OCI-LY7 (cell line): ENCODE measurements at regions of chr5 and their contacts with region 1.

Region 1: DNA sequence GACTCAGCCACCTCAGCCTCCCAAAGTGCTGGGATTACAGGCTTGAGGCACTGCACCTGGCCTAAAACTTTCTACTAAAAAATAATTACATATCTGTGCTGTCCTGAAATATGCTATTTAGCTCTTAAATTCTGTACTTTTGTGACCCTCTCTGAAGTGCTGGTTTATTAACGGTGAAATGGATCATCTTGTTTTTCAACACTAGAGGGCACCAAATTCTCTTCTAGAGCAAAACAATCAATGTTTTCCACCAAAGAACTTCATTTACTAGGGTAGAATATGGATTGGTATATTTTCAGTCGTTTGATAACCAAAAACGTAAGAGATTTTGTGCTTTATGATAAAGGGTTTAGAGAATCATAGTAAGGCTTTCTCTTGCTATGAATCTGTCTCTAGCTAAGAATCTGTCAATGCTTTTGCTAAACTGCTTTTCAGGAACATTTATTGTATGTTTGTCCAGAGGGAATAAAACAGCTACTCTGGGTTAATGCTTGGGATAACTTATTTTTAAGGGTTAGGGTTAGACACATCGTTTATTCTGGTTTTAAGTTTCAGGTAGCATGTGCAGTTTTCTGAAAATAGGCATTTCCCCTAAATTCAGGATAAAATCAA is 63.6 kb downstream of the RNF180 start:
- DNase-seq: peak; percentile 43
- H3K4me3 ChIP-seq: no peak overlapping the region
- H3K27ac ChIP-seq: no peak overlapping the region
- H3K4me1 ChIP-seq: no peaks in the 10 kb centered on the region
- CTCF ChIP-seq: peak; percentile 87

Region 2: DNA sequence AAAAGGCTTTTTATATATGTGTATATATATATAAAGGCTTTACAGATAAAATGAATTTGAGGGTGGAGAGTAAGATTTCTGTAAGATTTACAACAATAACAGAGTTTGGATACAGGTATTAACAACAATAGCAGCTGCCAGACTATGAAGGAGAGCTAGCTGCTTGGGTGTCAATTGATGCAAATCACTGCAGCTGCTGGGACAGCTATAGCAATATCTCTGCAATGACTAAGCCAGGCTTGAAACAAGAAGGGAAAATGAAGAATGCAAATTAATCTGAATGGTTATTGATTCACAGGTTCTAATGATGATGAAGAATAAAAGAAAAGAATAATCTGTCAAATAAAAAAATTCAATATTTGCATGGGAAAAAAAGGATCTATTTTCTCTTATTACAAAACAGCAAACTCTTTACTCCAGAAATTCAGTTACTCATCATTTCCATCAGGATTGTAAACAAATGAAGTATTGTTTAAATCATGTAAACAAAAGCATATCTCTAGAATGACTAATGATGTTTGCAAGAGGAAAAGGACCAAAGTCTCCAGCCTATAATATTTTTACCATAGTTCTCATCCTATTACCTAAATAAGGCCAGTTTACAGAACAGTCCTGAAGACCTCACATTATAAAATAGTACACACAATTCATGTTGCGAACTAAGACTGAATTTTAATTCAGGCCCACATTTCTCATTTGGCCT is 486.0 kb before region 1 on chr5:
- CTCF ChIA-PET with region 1: no interaction called
- POLR2A ChIA-PET with region 1: no interaction called
- intact Hi-C with region 1: no loop called
- DNase-seq: no peak
- H3K4me3 ChIP-seq: no peak overlapping the region
- H3K27ac ChIP-seq: no peak overlapping the region
- H3K4me1 ChIP-seq: no peaks in the 10 kb centered on the region
- CTCF ChIP-seq: no peak

Region 3: GRCh38 chr5:64784451-64785025 is 555.3 kb after region 1 on chr5:
- CTCF ChIA-PET with region 1: no interaction called
- POLR2A ChIA-PET with region 1: no interaction called
- intact Hi-C with region 1: loop called (anchors 5 kb)
- DNase-seq: peak; percentile 83
- H3K4me3 ChIP-seq: no peak overlapping the region
- H3K27ac ChIP-seq: no peak overlapping the region
- H3K4me1 ChIP-seq: no peaks in the 10 kb centered on the region
- CTCF ChIP-seq: peak; percentile 100